Mammary epithelial cell (primary cell): ENCODE measurements at regions of chr15 and their contacts with region 1.

Region 1: DNA sequence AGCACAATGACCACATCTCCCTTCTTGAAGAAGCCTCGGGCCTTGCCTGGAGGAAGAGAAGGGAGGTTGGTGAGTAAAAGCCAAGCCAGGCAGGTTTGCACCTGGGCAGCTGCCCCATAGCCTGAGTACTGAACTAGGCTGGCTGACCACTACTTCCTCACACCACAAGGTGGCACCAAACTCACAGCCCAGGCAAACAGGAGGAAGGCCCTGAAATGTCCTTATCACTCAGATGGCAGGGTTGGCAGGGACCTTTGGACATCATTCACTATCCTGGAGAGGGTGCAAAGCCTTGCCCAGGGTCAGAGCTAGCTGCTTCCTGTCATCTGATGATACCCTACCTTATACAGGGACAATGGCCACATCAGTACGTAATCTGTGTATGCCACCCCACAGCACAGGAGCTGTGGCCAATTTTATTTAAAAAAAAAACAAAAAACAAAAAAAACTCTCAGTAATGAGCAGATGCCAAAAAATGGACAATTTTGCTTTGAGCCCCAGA is 2.2 kb upstream of the GRAMD2A start:
- DNase-seq: peak; percentile 65
- H3K4me3 ChIP-seq: no peak overlapping the region
- H3K27ac ChIP-seq: no peak overlapping the region
- H3K4me1 ChIP-seq: peaks cover 84% of the 10 kb centered on the region
- H3K27me3 ChIP-seq: no peaks in the 10 kb centered on the region
- CTCF ChIP-seq: peak; percentile 96 to 98

Region 2: DNA sequence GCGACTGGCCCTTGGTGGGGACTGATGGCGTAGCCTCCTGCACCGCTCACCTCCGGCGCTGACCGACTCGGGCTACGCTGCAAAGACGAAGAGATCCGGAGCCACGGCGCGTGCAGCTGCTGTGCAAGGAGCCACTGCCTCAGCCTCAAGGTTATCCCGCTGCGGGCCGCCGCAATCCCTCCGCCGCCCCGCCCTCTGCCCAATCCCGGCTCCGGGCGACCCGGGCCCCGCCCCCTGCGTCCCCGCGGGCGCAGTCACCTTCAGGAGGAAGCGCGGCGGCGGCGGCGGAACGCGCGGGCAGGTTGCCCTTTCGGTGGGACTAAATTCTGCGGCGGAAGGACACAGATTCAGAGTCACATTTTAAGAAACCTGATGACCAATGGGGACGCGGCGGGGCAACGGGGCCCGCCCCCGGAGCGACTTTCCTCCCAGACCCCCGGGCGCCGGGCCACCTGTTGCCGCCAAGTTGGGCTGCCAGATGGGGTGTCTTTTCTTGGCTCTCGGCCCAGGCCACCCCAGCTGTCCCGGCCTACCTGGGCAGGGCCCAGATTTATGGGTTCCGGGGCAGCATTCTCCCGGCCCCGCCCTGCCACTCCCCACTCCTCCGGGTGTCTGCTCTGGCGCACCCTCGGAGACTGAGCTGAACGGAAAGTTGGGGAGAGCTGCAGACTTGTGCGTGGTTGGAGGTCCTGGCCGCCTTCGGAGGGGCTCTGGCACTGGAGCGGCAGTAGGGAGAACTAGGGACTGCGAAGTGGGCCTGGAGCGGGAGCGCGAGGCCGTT is 31.5 kb after region 1 on chr15 and contains the start of gene PKM:
- CTCF ChIA-PET with region 1: no interaction called
- dilution Hi-C with region 1: no loop called
- in situ Hi-C with region 1: no loop called
- intact Hi-C with region 1: loop called (anchors 1 kb)
- DNase-seq: peak; percentile 99
- H3K4me3 ChIP-seq: peak within 1 kb of the TSS; percentile 84 to 89 (median 86)
- H3K27ac ChIP-seq: peak within 1 kb of the TSS; percentile 92
- H3K4me1 ChIP-seq: peaks cover 27% of the 10 kb centered on the region
- H3K27me3 ChIP-seq: no peaks in the 10 kb centered on the region
- CTCF ChIP-seq: no peak
- total RNA-seq, gene PKM: 2,783 to 3,063 TPM

Region 3: GRCh38 chr15:72285927-72286516 is 86.3 kb after region 1 on chr15:
- CTCF ChIA-PET with region 1: no interaction called
- dilution Hi-C with region 1: no loop called
- in situ Hi-C with region 1: no loop called
- intact Hi-C with region 1: loop called (anchors 1 kb)
- DNase-seq: no peak
- H3K4me3 ChIP-seq: no peak overlapping the region
- H3K27ac ChIP-seq: no peak overlapping the region
- H3K4me1 ChIP-seq: peaks cover 12% of the 10 kb centered on the region
- H3K27me3 ChIP-seq: no peaks in the 10 kb centered on the region
- CTCF ChIP-seq: peak; percentile 25 to 58

Region 4: DNA sequence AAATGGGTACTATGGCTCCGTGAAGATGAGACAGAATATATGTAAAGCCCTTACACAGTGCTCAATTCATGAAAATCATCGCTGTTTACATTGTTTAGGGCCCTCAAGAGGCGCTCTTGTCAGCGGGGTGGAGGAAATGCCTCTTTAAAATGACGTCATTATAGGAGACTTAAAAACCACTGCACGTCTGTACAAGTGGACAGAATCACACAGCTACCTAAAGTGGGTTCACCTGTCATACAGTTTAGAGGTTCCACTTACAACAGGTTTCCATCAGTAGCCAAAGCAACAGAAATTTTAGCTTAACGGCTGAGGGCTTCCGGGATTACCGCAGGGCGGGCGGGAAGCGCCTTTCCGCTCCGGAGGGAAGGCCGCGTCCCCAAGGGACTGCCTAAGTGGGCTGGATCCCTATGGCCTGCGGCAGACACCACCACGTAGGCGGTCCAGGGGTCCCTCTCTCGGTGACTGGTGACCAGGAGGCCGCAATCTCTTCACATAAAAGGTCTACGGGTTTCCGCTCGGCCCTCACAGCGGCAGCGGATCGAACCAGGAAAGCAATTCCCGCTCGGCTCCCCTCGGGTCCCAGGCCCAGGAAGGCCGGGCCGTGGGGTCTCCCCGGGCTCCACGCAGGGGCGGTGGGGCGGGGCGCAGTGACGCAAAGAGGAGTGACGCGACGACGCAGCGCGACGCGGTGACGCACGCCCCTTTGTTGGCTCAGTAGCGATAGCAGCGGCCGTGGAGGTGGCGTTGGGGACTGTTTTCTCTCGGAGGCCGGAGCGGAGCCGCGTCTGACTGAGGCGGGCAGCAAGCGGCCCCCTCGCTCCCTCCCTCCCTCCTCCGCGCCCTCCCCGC is 274.1 kb after region 1 on chr15 and contains the start of gene ARIH1:
- CTCF ChIA-PET with region 1: no interaction called
- dilution Hi-C with region 1: no loop called
- in situ Hi-C with region 1: no loop called
- intact Hi-C with region 1: loop called (anchors 5 kb)
- DNase-seq: peak; percentile 94
- H3K4me3 ChIP-seq: peak within 1 kb of the TSS; percentile 60 to 99 (median 77)
- H3K27ac ChIP-seq: peak within 1 kb of the TSS; percentile 97
- H3K4me1 ChIP-seq: peaks cover 13% of the 10 kb centered on the region
- H3K27me3 ChIP-seq: no peaks in the 10 kb centered on the region
- CTCF ChIP-seq: peak; percentile 37 to 55
- total RNA-seq, gene ARIH1: 51.0 to 178 TPM

Region 5: DNA sequence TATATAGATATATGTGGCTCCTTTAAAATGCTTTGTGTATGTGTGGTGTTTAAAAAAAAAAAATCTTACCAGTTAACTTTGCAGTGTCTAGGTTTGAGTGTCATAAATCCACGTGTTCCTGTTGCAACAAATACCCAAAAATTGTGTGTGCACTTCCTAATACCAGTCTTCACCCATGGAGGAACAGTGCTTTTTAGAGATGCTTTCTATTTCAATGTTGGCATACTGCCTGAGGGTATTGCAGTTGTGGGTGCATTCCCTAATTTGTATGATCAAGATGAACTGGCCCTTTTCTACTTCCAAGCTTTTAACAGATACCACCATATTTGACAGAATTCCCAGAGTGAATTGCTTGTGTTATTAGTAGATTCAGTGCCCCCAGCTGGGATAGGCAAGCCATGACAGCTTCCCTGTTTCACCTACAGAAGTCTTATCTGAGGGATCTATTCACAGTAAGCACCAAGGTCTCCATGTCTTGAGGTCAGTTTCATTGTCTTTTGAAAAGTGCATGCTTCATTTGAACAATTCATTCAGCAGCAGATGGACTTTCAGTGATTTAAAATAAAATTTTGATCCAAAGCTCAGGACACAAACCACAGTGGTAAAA is 385.8 kb after region 1 on chr15:
- CTCF ChIA-PET with region 1: no interaction called
- dilution Hi-C with region 1: no loop called
- in situ Hi-C with region 1: no loop called
- intact Hi-C with region 1: loop called (anchors 5 kb)
- DNase-seq: peak; percentile 8
- H3K4me3 ChIP-seq: no peak overlapping the region
- H3K27ac ChIP-seq: no peak overlapping the region
- H3K4me1 ChIP-seq: no peaks in the 10 kb centered on the region
- H3K27me3 ChIP-seq: no peaks in the 10 kb centered on the region
- CTCF ChIP-seq: peak; percentile 5 to 40